Right ventricle myocardium inferior (tissue), 1 donor: ENCODE measurements at regions of chr21 and their contacts with region 1.

Region 1: DNA sequence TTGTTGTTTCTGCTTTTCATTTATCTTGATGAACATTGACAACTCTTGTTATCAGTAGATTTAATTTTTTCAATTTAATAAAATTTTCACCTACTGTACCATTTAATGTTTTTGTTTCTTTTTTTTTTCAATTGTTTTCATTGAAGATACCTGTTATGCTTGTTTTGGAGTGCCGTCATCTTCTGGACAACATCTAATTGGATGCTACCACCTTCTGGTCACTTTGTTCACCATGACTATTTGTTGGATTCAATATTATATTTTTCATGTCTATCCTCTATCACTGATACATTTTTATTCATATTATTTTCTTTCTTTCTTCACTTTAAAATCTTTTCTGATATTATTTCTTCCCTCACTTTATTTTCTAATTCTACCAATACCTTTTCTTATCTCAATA is 14.0 kb downstream of the KRTAP21-2 start:
- DNase-seq: no peak
- ATAC-seq: no peak

Region 2: DNA sequence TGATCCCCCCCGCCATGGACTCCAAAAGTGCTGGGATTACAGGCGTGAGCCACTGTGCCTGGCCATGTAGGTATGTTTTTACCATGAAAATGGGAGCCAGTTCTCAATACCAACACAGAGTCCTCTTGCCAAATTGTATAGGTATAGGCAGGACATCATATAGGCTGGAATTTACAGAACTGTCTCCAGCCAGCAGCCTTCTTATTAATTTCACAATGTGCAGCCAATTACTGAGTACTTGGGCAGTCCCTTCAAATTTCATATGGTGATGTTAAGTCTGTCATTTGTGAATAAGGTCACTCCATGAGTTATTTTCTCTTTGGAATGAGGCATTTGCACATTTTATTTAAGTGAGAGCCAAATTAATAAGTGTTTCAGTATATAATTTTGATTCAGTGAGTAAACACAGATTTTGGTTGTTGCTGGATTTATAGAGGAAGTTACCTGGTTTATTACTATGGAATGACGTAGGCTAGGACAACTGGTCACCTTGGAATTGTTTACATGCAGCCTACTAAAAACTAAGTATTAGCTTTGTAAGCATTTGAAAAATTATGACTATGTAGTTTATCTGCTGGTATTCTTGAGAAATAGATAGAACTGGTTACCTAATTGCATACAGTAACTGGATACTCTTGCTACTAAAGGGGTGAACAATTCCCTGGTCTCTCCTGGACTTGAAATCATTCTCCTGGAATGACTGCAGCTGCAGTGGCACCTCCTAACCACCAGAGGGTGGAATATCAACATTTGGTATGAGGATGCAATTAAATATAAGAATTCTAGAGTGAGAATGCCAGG is 392.4 kb before region 1 on chr21:
- intact Hi-C with region 1: loop called (anchors 10 kb)
- DNase-seq: no peak
- ATAC-seq: no peak

Region 3: DNA sequence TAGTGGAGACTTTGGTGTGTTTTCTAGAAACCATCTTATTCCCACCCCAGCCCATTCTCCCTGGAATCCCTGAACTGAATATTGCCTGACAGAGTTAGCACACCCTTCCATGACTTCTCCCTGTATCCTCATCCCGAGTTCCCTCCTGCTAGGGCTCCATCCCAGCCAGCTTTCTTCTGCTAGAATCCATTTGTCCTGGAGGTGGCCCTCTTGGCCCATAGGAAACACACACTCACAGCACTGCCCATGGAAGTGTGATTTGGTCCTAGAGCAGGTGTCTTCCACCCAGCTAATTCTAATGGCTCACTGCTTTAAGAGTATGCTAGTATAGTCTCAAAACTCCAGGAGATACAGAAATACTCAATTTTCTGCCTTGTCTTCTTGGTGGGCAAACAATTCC is 288.8 kb before region 1 on chr21:
- intact Hi-C with region 1: loop called (anchors 5 kb)
- DNase-seq: no peak
- ATAC-seq: no peak

Region 4: DNA sequence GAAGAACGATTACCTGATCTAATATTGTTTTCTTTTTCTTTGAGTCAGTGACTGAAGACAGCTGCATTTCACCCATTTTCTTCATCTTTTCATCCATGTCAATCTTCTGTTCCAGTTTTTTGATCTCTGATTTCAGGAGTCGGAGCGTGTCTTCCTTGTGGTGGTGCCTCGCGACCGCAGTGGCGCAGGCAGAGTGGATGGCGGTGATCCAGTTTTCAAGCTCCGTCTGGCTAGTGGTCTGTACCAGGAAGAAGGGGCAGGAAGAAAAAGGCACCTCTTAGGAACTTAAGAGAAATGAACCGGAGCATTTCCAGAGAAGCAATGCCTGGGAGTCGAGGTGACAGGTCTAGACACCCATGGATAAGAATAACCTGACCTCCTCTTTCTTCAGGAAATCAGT is 492.7 kb after region 1 on chr21:
- intact Hi-C with region 1: no loop called
- DNase-seq: no peak
- ATAC-seq: no peak